Heart left ventricle (tissue), 16 donors: ENCODE measurements at regions of chr20 and their contacts with region 1.

Region 1: DNA sequence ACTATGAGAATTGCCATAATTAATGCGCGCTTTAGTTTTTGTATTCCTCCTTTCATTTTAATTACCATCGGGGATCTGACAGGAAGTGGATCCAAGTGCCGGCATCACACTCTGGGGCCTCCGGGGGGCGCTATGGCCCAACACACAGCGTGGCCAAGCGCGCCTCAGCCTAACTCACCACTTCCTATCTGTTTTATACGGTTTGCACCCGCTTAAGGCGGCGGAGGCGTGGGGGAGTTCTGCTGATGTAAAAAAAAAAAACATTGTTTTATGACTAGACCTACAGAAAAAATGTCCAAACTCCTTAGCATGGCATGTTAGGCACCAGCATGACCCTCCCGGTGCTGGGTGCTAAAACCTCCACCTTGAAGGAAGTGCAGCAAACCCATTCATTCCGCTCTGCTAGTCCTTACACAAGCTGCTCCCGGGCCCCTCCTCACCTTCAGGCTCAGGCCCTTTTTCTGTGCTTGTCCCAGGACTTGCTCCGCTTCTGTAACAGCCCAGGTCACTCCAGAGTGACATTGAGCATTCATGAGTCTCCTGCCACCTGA is 4.5 kb upstream of the EBF4 start:
- DNase-seq: peak in 3 of 5 donors; percentile 34 to 69 (median 40)
- ATAC-seq: peak in 3 of 4 donors; percentile 48 to 71 (median 63)
- H3K4me3 ChIP-seq: no peak overlapping the region
- H3K27ac ChIP-seq: no peak overlapping the region
- H3K4me1 ChIP-seq: peaks cover 0 to 13% (median 4%) of the 10 kb centered on the region in 12 donors
- H3K27me3 ChIP-seq: peaks cover 0 to 16% (median 0%) of the 10 kb centered on the region in 9 donors
- CTCF ChIP-seq: peak; percentile 43 to 77 (median 58)
- POLR2A ChIP-seq: no peak

Region 2: DNA sequence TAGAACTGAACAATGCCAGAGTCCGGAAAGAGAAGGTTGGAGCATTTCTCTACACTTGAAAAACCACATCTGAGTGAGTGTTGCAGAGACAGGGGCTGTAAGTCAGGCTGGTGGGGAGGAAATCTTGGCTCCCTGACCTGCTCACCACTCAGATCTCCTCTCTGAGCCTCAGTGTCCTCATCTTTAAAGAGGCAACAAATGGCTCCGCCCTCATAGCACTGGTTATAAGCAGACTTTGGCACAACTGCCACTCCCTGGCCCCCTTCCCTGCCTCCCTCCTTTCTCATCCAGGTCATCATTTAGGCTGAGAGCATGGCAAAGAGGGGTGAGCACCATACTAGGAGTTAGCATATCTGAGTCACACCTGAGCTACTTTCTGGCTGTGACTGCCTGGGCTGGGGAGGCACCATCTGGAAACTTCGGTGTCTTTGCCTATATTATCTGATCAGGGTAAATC is 1041.1 kb before region 1 on chr20:
- intact Hi-C with region 1: no loop called
- DNase-seq: no peak
- ATAC-seq: no peak
- H3K4me3 ChIP-seq: no peak overlapping the region
- H3K27ac ChIP-seq: no peak overlapping the region
- H3K4me1 ChIP-seq: peaks cover 0 to 10% (median 0%) of the 10 kb centered on the region in 12 donors
- H3K27me3 ChIP-seq: peaks cover 0 to 15% (median 0%) of the 10 kb centered on the region in 9 donors
- CTCF ChIP-seq: no peak
- POLR2A ChIP-seq: no peak

Region 3: GRCh38 chr20:2585811-2586210 is 102.3 kb before region 1 on chr20:
- intact Hi-C with region 1: no loop called
- DNase-seq: no peak
- ATAC-seq: no peak
- H3K4me3 ChIP-seq: no peak overlapping the region
- H3K27ac ChIP-seq: no peak overlapping the region
- H3K4me1 ChIP-seq: no peaks in the 10 kb centered on the region
- H3K27me3 ChIP-seq: peaks cover 0 to 13% (median 0%) of the 10 kb centered on the region in 9 donors
- CTCF ChIP-seq: no peak
- POLR2A ChIP-seq: no peak

Region 4: DNA sequence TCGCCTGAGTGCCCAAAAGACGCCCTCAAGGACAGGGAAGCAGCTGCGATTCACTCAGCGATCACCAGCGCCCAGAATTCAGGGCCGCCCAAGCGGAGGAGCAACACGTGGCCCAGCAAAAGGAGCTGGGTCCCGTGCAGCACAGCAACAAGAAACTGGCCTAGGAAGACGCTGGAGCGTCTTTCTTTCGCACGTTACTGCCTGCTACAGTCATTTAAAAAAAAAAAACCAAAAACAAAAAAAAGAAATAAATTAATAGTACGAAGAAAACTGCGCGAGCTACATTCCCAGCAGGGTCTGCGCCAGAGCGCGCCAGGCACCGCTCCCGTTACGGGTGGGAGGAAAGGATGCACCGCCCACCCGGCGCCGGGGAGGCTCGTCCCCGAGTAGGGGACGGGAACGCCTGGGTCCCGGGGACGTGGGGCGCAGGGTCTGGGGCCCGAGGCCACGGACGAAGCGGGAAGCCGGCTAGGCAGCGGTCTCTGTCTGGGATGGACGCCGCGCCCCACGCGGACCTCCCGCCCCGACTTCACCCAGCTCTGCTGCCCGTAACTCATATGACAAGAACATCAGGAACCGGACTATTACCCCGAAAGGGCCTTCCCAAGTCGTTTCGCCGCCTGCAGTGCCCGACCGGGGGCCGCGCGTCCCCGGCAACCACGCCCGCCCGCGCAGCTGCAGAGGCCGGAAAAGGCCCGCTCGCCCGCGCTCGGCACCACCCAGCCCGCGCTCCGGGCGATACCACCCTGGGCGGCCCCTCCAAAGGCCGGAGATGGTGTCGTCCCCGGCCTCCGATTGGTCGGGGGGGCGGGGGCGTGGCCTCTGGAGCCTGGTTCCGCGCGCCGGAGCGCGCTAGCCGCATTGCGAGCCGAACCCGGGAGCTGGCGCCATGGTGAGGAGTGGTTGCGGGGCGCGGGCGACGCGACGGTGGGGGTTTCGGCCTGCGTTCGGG is 36.1 kb before region 1 on chr20 and contains the start of gene NOP56:
- intact Hi-C with region 1: no loop called
- DNase-seq: peak; percentile 92 to 97 (median 94)
- ATAC-seq: peak; percentile 96 to 98 (median 98)
- H3K4me3 ChIP-seq: peak within 1 kb of the TSS; percentile 71 to 99 (median 90)
- H3K27ac ChIP-seq: peak within 1 kb of the TSS; percentile 85 to 98 (median 94)
- H3K4me1 ChIP-seq: peaks cover 4 to 28% (median 20%) of the 10 kb centered on the region in 12 donors
- H3K27me3 ChIP-seq: no peaks in the 10 kb centered on the region
- CTCF ChIP-seq: no peak
- POLR2A ChIP-seq: peak; percentile 18 to 94
- total RNA-seq, gene NOP56: 24.6 to 78.8 (median 51.0) TPM

Region 5: DNA sequence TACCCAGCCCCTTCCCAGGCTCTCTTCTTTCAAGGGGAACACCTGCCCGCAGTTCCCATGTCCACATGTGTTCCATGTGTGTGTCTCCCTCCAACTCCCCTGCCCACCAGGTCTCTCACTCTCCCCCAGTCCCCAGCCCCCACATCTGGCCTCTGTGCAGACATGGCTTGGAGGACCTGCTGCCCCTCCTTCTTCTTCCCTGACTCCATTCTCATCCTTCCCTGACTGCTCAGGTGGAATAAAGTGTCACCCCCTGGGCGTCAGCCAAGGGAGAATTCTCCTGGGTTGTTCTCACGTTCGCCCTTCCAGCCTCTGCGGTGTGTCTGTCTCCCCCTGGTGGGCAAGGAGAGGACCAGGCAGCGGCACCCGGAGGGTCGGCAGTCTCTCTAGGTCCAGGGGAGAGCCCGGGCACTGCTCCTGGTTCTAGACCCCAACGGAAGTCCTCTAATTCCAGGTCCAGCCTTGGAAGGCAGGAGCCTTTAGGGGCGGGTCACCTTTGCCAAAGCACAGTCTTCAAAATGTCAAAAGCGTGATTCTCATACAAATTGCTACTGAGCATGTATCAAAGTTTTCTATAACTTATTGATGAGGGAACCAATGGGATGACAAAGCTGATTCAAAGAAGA is 54.9 kb after region 1 on chr20:
- intact Hi-C with region 1: loop called in 3 of 10 experiments (anchors 2 to 10 kb)
- DNase-seq: peak in 2 of 5 donors; percentile 32 to 36
- ATAC-seq: peak in 3 of 4 donors; percentile 37 to 55 (median 54)
- H3K4me3 ChIP-seq: no peak overlapping the region
- H3K27ac ChIP-seq: peak overlapping the region in 1 of 12 donors; percentile 32
- H3K4me1 ChIP-seq: peaks cover 0 to 9% (median 0%) of the 10 kb centered on the region in 12 donors
- H3K27me3 ChIP-seq: peaks cover 0 to 5% (median 0%) of the 10 kb centered on the region in 9 donors
- CTCF ChIP-seq: peak; percentile 47 to 90 (median 66)
- POLR2A ChIP-seq: no peak

Region 6: GRCh38 chr20:2760297-2760951 is 72.3 kb after region 1 on chr20:
- intact Hi-C with region 1: no loop called
- DNase-seq: no peak
- ATAC-seq: no peak
- H3K4me3 ChIP-seq: no peak overlapping the region
- H3K27ac ChIP-seq: no peak overlapping the region
- H3K4me1 ChIP-seq: no peaks in the 10 kb centered on the region
- H3K27me3 ChIP-seq: peaks cover 0 to 54% (median 13%) of the 10 kb centered on the region in 9 donors
- CTCF ChIP-seq: no peak
- POLR2A ChIP-seq: no peak

Region 7: GRCh38 chr20:2840138-2840966 is 152.2 kb after region 1 on chr20 and contains the starts of genes PCED1A and VPS16:
- intact Hi-C with region 1: loop called in 3 of 10 experiments (anchors 5 to 10 kb)
- DNase-seq: peak; percentile 89 to 95 (median 91)
- ATAC-seq: peak; percentile 97 to 99 (median 98)
- H3K4me3 ChIP-seq: peak within 1 kb of the TSS; percentile 70 to 99 (median 91)
- H3K27ac ChIP-seq: peak within 1 kb of the TSS; percentile 69 to 96 (median 87)
- H3K4me1 ChIP-seq: peaks cover 0 to 26% (median 15%) of the 10 kb centered on the region in 12 donors
- H3K27me3 ChIP-seq: no peaks in the 10 kb centered on the region
- CTCF ChIP-seq: no peak
- POLR2A ChIP-seq: peak in 1 of 2 donors; percentile 46
- total RNA-seq, gene PCED1A: 5.0 to 20.7 (median 6.8) TPM
- total RNA-seq, gene VPS16: 13.9 to 28.6 (median 19.5) TPM

Region 8: DNA sequence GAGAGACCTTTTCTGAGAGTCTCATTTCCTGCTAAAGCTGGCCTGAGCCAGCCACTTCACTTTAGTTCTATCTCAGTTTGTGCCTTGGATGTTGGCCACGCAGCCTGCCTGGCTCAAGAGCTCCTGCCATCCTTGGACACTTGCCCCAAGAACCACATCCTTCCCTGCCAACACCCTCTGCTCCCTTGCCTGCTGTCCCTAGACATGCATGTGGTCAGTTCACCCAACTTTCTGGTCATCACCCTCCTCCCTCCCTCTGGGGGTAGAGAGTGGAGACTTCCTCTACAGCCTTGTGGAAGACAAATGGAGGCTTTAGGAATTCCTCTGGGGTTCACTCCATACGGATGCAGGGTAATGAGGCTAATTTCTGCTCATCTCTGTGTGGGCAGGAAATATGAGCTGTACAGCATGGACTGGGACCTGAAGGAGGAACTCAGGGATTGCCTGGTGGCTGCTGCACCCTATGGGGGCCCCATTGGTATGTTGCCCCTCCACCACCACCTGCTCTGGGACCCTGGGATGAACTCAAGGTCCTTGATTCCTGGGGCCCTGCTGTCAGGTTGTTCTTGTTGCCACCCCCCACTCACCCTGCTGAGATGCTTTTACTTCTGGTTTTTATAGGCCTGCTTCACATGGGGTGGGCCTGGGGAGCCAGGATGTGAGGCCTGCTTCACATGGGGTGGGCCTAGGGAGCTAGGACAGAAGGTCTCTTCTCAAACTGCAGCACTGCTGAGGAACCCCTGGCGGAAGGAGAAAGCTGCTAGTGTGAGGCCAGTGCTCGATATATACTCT is 171.4 kb after region 1 on chr20:
- intact Hi-C with region 1: loop called in 1 of 10 experiments (anchors 10 kb)
- DNase-seq: peak in 1 of 5 donors; percentile 45
- ATAC-seq: peak in 3 of 4 donors; percentile 34 to 54 (median 52)
- H3K4me3 ChIP-seq: no peak overlapping the region
- H3K27ac ChIP-seq: no peak overlapping the region
- H3K4me1 ChIP-seq: peaks cover 0 to 14% (median 7%) of the 10 kb centered on the region in 12 donors
- H3K27me3 ChIP-seq: no peaks in the 10 kb centered on the region
- CTCF ChIP-seq: no peak
- POLR2A ChIP-seq: no peak

Region 9: GRCh38 chr20:3000852-3001523 is 312.9 kb after region 1 on chr20:
- intact Hi-C with region 1: loop called in 1 of 10 experiments (anchors 2 kb)
- DNase-seq: no peak
- ATAC-seq: peak; percentile 49 to 72 (median 56)
- H3K4me3 ChIP-seq: no peak overlapping the region
- H3K27ac ChIP-seq: no peak overlapping the region
- H3K4me1 ChIP-seq: no peaks in the 10 kb centered on the region
- H3K27me3 ChIP-seq: no peaks in the 10 kb centered on the region
- CTCF ChIP-seq: peak in 10 of 12 donors; percentile 37 to 65 (median 48)
- POLR2A ChIP-seq: no peak